Right ventricle myocardium inferior (tissue), 1 donor: ENCODE measurements at regions of chr9 and their contacts with region 1.

Region 1: DNA sequence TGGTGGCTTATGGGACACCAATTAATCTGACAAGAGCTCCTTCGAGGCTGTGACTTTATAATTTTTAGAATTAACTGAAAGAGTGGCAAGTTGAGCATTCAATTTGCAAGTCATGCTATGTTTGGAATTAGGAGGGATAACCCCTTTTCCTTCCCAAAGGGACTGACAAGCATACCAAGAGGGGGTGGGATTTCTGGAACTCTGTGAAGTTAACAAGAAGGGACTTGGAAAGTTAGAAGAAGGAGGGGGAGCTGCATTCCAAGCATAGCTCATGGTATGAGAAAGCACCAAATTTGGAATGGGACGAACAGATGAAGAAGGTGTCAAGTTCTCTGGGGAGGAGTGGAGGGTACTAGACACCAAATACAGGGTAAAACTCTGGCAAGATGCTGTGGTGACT is 8.9 kb upstream of the PALM2AKAP2 start:
- DNase-seq: no peak
- ATAC-seq: no peak

Region 2: GRCh38 chr9:109182940-109183798 is 587.9 kb before region 1 on chr9:
- intact Hi-C with region 1: no loop called
- DNase-seq: no peak
- ATAC-seq: no peak

Region 3: GRCh38 chr9:109705515-109705914 is 65.6 kb before region 1 on chr9:
- intact Hi-C with region 1: loop called (anchors 5 kb)
- DNase-seq: no peak
- ATAC-seq: no peak

Region 4: DNA sequence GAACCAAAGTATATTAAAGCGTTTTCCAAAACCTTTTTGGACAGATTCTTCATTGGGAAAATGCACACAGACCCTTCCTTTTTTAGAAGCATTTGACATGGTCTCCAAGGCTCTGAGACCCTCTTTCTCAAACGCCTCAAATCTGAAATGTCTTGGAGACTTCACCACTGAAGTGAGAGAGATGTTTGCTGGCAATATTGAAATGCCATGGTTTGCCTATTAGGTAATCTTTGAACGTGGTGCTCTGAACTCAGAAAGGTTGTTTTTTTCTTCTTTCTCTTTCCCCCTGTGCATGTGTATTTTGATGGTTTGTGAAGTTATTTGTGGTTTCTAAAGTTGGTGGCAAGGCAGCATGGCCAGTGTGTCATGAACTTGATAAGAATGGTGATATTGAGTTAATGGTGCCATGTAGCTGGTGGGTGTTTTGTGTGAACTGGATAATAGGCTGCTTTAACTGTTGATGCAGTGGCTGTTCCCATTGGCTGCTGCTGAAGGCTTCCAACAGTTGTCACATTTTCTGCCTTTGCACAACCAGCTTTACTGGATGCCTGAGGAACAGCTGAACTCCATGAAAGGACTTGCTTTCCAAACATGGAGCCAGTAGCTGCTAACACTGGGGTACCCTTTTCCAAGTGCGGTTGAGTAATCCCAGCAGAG is 10.6 kb after region 1 on chr9:
- intact Hi-C with region 1: no loop called
- DNase-seq: no peak
- ATAC-seq: peak; percentile 55

Region 5: GRCh38 chr9:109817846-109818472 is 46.9 kb after region 1 on chr9:
- intact Hi-C with region 1: no loop called
- DNase-seq: no peak
- ATAC-seq: peak; percentile 81